ENCODE measurements at regions of chr13 and their contacts with region 1.

Region 1: DNA sequence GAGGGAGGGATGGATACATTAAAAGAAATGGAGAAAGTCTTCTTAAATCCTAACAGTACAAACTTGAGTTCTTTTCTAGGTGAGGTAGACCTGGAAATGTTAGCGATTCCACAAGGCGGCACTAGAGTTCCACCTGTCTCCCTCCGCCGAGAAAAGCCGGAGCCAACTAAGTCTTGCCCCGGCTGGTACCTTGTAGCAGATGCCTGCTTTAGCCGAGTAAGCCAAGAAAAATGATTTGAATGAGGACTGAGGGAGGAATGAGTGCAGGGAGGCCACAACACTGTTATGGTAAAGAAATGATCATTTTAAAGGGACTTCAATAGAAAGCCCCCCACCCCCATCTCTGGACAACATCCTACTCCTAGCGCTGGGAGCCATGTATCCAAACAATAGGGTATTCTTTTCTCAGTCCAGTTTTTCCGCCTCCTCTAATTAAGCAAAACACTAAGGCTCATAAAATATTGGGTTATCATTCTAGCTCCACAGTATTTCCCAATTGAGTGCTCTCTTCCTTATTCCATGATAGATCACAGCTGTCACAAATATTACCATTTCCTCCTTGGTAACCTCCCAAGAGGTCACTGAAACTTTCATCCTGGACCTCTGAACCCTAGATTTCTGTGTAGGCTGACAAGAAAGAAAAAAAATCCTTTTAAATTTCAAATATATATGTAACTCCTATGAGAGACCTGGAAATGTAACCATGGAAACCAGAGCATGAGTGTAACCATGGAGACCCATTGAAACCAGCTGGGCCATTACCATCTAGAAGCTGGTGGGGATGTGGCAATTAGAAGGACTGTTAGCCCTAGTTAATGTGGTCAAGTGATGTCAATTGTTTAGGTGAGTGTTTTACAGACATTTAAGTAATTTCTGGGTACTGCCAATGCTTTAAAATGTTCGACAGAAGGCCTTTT is 58.3 kb downstream of the GPALPP1 start:
- DNase-seq: peak; percentile 82
- CTCF ChIP-seq: peak; percentile 67

Region 2: DNA sequence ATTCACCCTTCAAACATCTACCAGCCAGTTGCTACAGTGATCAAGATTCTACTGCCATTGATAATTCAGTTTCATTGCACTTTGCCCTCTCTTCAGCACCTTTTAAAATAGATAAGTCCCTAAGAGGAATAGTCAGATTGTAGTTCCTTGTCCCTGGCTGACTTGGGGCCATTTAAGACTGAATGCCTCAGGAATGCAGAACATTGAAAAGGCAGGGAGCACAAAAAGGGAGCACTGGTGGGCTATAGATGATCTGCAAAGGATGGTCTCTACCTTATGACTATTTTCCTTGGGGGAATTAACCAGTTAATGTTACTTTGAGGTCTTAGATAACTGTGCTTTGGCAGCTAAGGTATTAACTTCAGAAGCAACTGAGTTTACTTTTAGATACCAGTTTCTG is 11.4 kb before region 1 on chr13:
- CTCF ChIA-PET with region 1: interaction called, 44 read pairs
- POLR2A ChIA-PET with region 1: no interaction called
- DNase-seq: no peak
- CTCF ChIP-seq: no peak

Region 3: DNA sequence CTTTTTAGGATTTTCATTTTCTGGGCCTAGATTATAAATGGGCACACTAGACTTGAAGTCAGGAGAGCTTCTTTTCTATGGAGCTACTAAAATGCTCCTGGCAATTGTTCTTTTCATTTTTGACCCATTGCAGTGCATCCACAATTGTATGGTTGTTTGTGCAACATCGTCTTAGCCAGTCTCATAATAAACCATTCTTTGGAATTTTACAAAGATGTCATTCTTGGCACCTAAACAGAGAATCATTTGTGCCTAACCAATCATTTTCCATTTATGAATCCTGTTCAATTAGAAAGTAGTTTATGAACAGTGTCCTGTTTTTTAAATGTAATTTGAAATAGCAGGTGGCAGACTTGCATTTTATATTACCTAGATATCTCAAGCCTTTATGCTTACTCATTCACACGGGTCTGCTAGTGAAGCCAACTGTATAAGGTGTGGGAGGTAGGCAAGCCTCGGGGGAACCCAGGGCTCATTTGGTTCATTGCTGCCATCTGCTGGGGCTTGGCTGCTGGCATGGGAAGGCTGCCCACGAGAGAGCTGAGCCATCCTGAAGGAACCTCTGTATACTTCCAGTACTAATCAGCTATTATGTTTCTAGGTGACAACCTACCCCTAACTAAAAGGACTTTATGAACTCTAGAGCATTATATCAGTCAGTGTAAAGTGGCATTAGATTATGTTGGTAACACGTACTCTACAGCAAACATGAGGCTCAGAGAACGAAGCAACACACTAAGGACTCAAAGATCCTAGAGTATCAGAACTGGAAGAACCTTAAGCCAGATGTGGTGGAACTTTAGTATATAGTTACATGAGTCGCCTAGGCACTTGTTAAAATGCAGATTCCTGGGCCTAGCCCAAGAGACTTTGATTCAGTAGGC is 233.3 kb after region 1 on chr13:
- CTCF ChIA-PET with region 1: interaction called, 88 read pairs
- POLR2A ChIA-PET with region 1: no interaction called
- DNase-seq: peak; percentile 79
- CTCF ChIP-seq: peak; percentile 72

Region 4: GRCh38 chr13:45297456-45298205 is 250.0 kb after region 1 on chr13:
- CTCF ChIA-PET with region 1: interaction called, 120 read pairs
- POLR2A ChIA-PET with region 1: no interaction called
- DNase-seq: no peak
- CTCF ChIP-seq: no peak

Region 5: DNA sequence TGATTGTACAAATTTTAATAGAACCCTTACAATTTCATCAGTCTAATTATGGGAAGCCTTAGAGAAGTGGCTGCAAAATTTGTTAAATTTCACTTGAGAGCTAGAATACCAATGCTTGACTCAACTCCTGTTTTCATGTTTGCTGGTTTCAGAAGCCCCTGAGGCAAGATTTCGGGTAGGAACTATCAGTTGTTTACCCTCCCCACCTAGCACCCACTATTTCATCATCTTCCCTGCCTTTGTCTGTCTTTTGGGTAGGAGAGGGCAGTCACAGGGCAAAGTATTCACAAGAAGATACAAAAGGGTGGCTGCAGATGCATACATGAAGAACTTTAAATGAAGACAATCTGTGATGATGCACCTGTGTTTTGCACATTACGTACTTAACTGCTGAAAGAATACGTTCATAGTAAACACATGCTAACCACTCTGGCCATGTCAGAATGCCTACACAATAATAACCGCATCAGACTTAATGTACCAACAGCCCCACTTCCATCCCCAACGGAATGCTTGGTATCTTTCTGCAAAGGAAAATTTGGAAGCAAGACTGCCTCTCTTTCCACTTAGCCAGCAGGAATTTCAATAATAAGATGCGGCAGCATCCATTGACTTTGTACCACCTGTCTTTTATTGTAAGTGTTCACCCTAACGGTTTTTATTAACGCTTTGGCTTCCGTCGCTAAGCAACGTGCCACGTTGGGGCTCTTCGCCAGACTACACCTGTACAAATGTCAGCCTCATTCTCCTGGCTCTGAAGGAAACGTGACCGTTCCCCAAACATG is 262.9 kb after region 1 on chr13:
- CTCF ChIA-PET with region 1: interaction called, 120 read pairs
- POLR2A ChIA-PET with region 1: no interaction called
- DNase-seq: no peak
- CTCF ChIP-seq: no peak

Measured in GM10248 (cell line).